ENCODE measurements at regions of chr6 and their contacts with region 1.

Region 1: GRCh38 chr6:47477497-47478232 is at the start of gene CD2AP:
- DNase-seq: peak; percentile 91
- ATAC-seq: peak; percentile 89
- H3K4me3 Mint-ChIP-seq: peak within 1 kb of the TSS; percentile 90
- H3K27ac Mint-ChIP-seq: peak within 1 kb of the TSS; percentile 97
- H3K4me1 Mint-ChIP-seq: peaks cover 43% of the 10 kb centered on the region
- H3K27me3 Mint-ChIP-seq: no peaks in the 10 kb centered on the region
- CTCF ChIP-seq: no peak
- total RNA-seq, gene CD2AP: 31.1 and 34.1 TPM in 2 replicates

Region 2: DNA sequence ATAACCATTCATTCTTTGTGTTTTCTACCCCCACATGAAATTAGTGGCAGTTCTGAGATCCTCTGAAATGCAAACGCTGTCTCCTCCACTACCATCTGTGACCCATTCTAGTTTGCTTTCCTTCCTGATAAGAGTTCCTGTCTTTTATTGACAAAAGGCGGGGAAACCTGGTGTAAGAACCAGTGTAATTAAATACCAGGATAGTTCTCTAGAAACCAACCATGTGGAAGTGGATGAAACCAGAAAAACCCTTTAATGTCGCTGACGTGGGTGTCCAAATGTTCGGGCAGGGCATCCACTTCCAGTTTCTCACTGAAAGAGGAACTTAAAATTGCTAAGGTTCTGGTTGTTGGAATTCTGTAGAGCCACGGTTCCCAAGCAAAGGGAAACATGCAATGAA is 247.1 kb before region 1 on chr6:
- CTCF ChIA-PET with region 1: no interaction called
- POLR2A ChIA-PET with region 1: no interaction called
- intact Hi-C with region 1: no loop called
- DNase-seq: no peak
- ATAC-seq: no peak
- H3K4me3 Mint-ChIP-seq: no peak overlapping the region
- H3K27ac Mint-ChIP-seq: no peak overlapping the region
- H3K4me1 Mint-ChIP-seq: peaks cover under 1% of the 10 kb centered on the region
- H3K27me3 Mint-ChIP-seq: no peaks in the 10 kb centered on the region
- CTCF ChIP-seq: no peak

Region 3: GRCh38 chr6:47242483-47243386 is 234.9 kb before region 1 on chr6:
- CTCF ChIA-PET with region 1: no interaction called
- POLR2A ChIA-PET with region 1: interaction called, 7 read pairs
- intact Hi-C with region 1: loop called (anchors 5 kb)
- DNase-seq: peak; percentile 65
- ATAC-seq: peak; percentile 99
- H3K4me3 Mint-ChIP-seq: peak overlapping the region; percentile 59
- H3K27ac Mint-ChIP-seq: peak overlapping the region; percentile 83
- H3K4me1 Mint-ChIP-seq: peaks cover 36% of the 10 kb centered on the region
- H3K27me3 Mint-ChIP-seq: no peaks in the 10 kb centered on the region
- CTCF ChIP-seq: no peak

Region 4: DNA sequence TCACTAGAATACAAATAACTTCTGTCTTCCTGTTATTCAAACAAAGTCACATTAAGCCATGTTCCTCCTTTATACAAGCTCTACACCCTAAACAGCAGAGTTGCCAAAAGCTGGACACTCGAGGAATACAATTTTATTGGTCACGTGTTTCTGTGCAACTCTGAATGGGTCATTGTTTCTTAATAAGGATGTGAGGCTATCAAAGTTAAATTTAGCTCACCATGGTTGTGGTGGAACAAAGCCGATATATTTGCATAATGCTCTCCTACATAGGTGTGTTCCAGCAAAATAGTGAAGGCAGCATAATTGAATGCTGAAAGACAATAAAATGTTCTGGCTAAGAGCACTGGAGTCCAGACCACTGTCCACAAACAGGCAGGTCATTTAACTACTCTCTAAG is 36.9 kb before region 1 on chr6:
- CTCF ChIA-PET with region 1: no interaction called
- POLR2A ChIA-PET with region 1: interaction called, 24 read pairs
- intact Hi-C with region 1: loop called (anchors 2 kb)
- DNase-seq: no peak
- ATAC-seq: peak; percentile 34
- H3K4me3 Mint-ChIP-seq: peak overlapping the region; percentile 38
- H3K27ac Mint-ChIP-seq: no peak overlapping the region
- H3K4me1 Mint-ChIP-seq: peaks cover 48% of the 10 kb centered on the region
- H3K27me3 Mint-ChIP-seq: no peaks in the 10 kb centered on the region
- CTCF ChIP-seq: no peak

Region 5: GRCh38 chr6:47455534-47456209 is 22.0 kb before region 1 on chr6:
- CTCF ChIA-PET with region 1: no interaction called
- POLR2A ChIA-PET with region 1: interaction called, 28 read pairs
- intact Hi-C with region 1: no loop called
- DNase-seq: no peak
- ATAC-seq: no peak
- H3K4me3 Mint-ChIP-seq: no peak overlapping the region
- H3K27ac Mint-ChIP-seq: no peak overlapping the region
- H3K4me1 Mint-ChIP-seq: peaks cover 7% of the 10 kb centered on the region
- H3K27me3 Mint-ChIP-seq: no peaks in the 10 kb centered on the region
- CTCF ChIP-seq: no peak

Region 6: GRCh38 chr6:47464052-47464451 is 13.6 kb before region 1 on chr6:
- CTCF ChIA-PET with region 1: no interaction called
- POLR2A ChIA-PET with region 1: interaction called, 28 read pairs
- intact Hi-C with region 1: loop called (anchors 1 kb)
- DNase-seq: no peak
- ATAC-seq: no peak
- H3K4me3 Mint-ChIP-seq: no peak overlapping the region
- H3K27ac Mint-ChIP-seq: no peak overlapping the region
- H3K4me1 Mint-ChIP-seq: peaks cover 18% of the 10 kb centered on the region
- H3K27me3 Mint-ChIP-seq: no peaks in the 10 kb centered on the region
- CTCF ChIP-seq: no peak

Region 7: GRCh38 chr6:47490676-47491075 is 13.0 kb after region 1 on chr6:
- CTCF ChIA-PET with region 1: interaction called, 3 read pairs
- POLR2A ChIA-PET with region 1: interaction called, 16 read pairs
- intact Hi-C with region 1: loop called (anchors 1 kb)
- DNase-seq: no peak
- ATAC-seq: no peak
- H3K4me3 Mint-ChIP-seq: no peak overlapping the region
- H3K27ac Mint-ChIP-seq: no peak overlapping the region
- H3K4me1 Mint-ChIP-seq: peaks cover 49% of the 10 kb centered on the region
- H3K27me3 Mint-ChIP-seq: no peaks in the 10 kb centered on the region
- CTCF ChIP-seq: no peak

Region 8: DNA sequence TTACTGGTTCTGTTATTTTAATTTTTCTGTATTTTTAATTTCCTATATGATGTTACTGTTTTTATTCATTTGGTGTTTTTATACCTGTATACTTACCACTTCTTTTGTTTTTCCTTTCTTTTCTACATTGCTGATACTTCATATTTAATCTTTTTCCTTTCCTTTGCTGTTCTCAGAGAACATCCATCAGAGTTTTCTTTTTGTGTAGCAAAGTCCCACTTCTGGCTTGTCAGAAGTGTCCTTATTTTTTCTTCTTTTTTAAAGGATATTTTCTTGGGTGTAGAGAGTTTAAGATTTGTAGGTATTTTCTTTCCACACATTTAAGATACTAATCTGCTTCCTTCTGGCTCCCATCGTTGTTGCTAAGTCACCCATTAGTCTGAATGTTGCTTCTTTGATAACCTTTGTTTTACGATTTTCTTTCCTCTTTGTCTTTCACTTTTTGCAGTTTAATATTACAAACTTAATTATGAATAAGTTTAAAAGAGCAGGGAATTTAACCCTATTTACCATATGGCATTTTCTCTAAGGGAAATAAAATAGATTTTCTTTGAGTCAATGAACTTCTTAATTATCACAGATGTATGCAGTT is 18.4 kb after region 1 on chr6:
- CTCF ChIA-PET with region 1: interaction called, 3 read pairs
- POLR2A ChIA-PET with region 1: interaction called, 16 read pairs
- intact Hi-C with region 1: loop called (anchors 1 kb)
- DNase-seq: no peak
- ATAC-seq: no peak
- H3K4me3 Mint-ChIP-seq: no peak overlapping the region
- H3K27ac Mint-ChIP-seq: no peak overlapping the region
- H3K4me1 Mint-ChIP-seq: peaks cover 63% of the 10 kb centered on the region
- H3K27me3 Mint-ChIP-seq: no peaks in the 10 kb centered on the region
- CTCF ChIP-seq: no peak